GM12878 (cell line): ENCODE measurements at regions of chr22 and their contacts with region 1.

Region 1: DNA sequence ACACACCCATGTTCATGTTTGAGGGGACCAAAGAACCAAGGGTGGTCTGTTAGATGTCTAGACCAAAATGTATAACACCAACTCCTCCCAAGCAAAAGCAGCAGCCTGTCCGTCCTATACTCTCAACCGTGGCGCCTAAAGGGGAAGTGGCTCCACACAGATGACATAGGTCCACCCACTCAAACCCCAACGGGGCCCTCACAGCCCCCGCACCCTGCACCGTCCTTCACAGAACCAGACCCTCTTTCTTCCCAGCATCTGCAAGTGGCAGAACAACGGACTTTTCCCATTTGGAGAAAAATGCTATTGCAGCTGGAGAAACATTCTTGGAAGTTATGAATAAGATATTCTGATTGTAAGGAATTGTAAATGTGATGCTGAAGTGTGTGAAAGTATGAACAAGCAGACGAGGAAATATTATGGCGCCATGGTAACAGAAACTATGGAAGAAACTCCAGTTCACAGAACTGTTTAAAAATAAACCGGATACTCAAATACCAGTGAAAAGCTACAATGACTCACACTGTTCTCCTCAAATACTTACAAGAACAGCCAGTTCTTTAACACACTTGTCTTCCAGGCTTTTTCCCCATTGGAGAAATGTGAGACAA is 76.5 kb upstream of the ARFGAP3 start:
- DNase-seq: peak; percentile 71
- ATAC-seq: peak; percentile 74
- H3K4me3 ChIP-seq: peak overlapping the region; percentile 74
- H3K27ac ChIP-seq: peak overlapping the region; percentile 99
- H3K4me1 ChIP-seq: peaks cover 81% of the 10 kb centered on the region
- H3K27me3 ChIP-seq: no peaks in the 10 kb centered on the region
- CTCF ChIP-seq: no peak
- EP300 ChIP-seq: peak; percentile 88 to 91
- POLR2A ChIP-seq: peak; percentile 67
- RAD21 ChIP-seq: no peak

Region 2: GRCh38 chr22:42493393-42493792 is 440.2 kb before region 1 on chr22:
- CTCF ChIA-PET with region 1: no interaction called
- POLR2A ChIA-PET with region 1: no interaction called
- RAD21 ChIA-PET with region 1: no interaction called
- SMC1A ChIA-PET with region 1: no interaction called
- in situ Hi-C with region 1: no loop called
- intact Hi-C with region 1: no loop called
- DNase-seq: no peak
- ATAC-seq: no peak
- H3K4me3 ChIP-seq: no peak overlapping the region
- H3K27ac ChIP-seq: no peak overlapping the region
- H3K4me1 ChIP-seq: peaks cover 5% of the 10 kb centered on the region
- H3K27me3 ChIP-seq: no peaks in the 10 kb centered on the region
- CTCF ChIP-seq: no peak
- EP300 ChIP-seq: no peak
- POLR2A ChIP-seq: no peak
- RAD21 ChIP-seq: no peak

Region 3: GRCh38 chr22:42889304-42889703 is 44.3 kb before region 1 on chr22:
- CTCF ChIA-PET with region 1: interaction called, 9 read pairs
- POLR2A ChIA-PET with region 1: interaction called, 15 read pairs
- RAD21 ChIA-PET with region 1: interaction called, 15 read pairs
- SMC1A ChIA-PET with region 1: interaction called, 18 read pairs
- in situ Hi-C with region 1: no loop called
- intact Hi-C with region 1: loop called (anchors 2 kb)
- DNase-seq: peak; percentile 97
- ATAC-seq: peak; percentile 90
- H3K4me3 ChIP-seq: peak overlapping the region; percentile 19; the same call in 1 of the 2 replicates
- H3K27ac ChIP-seq: peak overlapping the region; percentile 84
- H3K4me1 ChIP-seq: peaks cover 58% of the 10 kb centered on the region
- H3K27me3 ChIP-seq: no peaks in the 10 kb centered on the region
- CTCF ChIP-seq: no peak
- EP300 ChIP-seq: peak; percentile 89 to 93
- POLR2A ChIP-seq: peak; percentile 52
- RAD21 ChIP-seq: no peak

Region 4: DNA sequence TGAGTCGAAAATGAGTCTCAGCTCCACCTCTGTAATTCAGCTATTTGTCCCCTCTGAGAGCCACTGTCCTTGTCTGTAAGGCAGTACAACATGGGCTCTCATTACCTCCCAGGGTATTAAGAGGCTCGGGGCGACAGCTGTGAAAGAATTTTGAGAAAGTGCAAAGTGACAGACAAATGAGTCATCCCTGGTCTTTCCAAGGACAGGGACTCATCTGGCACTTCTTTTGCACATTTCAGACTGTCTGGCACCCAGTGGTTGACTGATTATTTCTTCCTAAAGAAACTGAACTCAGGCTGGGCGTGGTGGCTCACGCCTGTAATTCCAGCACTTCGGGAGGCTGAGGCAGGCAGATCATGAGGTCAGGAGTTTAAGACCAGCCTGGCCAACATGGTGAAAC is 14.4 kb before region 1 on chr22:
- CTCF ChIA-PET with region 1: interaction called, 12 read pairs
- POLR2A ChIA-PET with region 1: interaction called, 10 read pairs
- RAD21 ChIA-PET with region 1: interaction called, 11 read pairs
- SMC1A ChIA-PET with region 1: interaction called, 35 read pairs
- in situ Hi-C with region 1: no loop called
- intact Hi-C with region 1: no loop called
- DNase-seq: no peak
- ATAC-seq: peak; percentile 36; the same call in 2 of the 3 replicates
- H3K4me3 ChIP-seq: no peak overlapping the region
- H3K27ac ChIP-seq: peak overlapping the region; percentile 33; the same call in 1 of the 2 replicates
- H3K4me1 ChIP-seq: no peaks in the 10 kb centered on the region; the same call in 1 of the 2 replicates
- H3K27me3 ChIP-seq: no peaks in the 10 kb centered on the region
- CTCF ChIP-seq: no peak
- EP300 ChIP-seq: no peak
- POLR2A ChIP-seq: no peak
- RAD21 ChIP-seq: no peak

Region 5: DNA sequence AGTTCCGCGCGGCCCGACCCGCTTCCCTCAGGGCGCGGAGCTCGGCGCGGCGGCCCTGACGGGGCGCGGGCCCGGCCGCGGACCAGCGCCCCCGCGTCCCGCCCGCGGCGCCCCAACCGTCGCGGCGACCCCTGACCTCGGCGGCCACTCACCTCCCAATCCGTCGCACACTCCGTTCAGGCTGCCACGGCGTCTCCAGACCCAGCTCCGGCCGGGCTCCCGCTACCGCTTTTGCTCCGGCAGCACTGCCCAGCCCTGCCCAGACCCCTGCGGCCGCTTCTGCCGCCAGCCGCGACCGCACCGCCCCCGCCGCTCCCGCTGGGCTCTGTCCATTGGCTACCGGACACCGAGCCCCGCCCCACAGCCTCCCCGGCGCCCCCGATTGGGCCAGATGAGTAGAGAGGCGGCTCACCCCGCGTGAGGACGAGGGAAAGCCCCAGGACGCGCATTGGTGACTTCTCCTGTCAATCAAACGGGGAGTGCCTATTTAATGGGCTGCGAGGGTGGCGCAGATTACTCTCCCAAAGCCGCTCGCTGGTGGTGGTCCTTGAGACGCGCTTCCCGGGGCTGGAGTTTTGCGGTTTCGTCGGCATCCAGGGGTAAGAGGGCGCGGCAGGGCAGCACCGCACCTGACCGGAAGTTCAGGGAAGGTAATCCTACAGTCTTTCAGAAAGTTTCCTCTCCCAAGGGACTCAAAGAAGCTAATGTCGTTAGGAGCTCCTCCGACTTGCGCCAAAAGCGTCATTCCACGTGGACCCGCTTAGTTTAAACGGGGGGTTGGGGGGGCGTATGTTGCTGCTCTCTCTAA is 81.5 kb after region 1 on chr22 and contains the start of gene PACSIN2:
- CTCF ChIA-PET with region 1: interaction called, 3 read pairs
- POLR2A ChIA-PET with region 1: interaction called, 8 read pairs
- RAD21 ChIA-PET with region 1: interaction called, 6 read pairs
- SMC1A ChIA-PET with region 1: interaction called, 7 read pairs
- in situ Hi-C with region 1: no loop called
- intact Hi-C with region 1: loop called (anchors 5 kb)
- DNase-seq: peak; percentile 82
- ATAC-seq: peak; percentile 98
- H3K4me3 ChIP-seq: peak within 1 kb of the TSS; percentile 97
- H3K27ac ChIP-seq: peak within 1 kb of the TSS; percentile 68
- H3K4me1 ChIP-seq: no peaks in the 10 kb centered on the region
- H3K27me3 ChIP-seq: no peaks in the 10 kb centered on the region
- CTCF ChIP-seq: 0 out of 6 replicates have a peak, but pooled peaks of 1 of the 3 experiments have one; percentile 0
- EP300 ChIP-seq: no peak
- POLR2A ChIP-seq: peak; percentile 99
- RAD21 ChIP-seq: no peak
- polyA plus RNA-seq, gene PACSIN2: 0.93 to 1.6 TPM

Region 6: DNA sequence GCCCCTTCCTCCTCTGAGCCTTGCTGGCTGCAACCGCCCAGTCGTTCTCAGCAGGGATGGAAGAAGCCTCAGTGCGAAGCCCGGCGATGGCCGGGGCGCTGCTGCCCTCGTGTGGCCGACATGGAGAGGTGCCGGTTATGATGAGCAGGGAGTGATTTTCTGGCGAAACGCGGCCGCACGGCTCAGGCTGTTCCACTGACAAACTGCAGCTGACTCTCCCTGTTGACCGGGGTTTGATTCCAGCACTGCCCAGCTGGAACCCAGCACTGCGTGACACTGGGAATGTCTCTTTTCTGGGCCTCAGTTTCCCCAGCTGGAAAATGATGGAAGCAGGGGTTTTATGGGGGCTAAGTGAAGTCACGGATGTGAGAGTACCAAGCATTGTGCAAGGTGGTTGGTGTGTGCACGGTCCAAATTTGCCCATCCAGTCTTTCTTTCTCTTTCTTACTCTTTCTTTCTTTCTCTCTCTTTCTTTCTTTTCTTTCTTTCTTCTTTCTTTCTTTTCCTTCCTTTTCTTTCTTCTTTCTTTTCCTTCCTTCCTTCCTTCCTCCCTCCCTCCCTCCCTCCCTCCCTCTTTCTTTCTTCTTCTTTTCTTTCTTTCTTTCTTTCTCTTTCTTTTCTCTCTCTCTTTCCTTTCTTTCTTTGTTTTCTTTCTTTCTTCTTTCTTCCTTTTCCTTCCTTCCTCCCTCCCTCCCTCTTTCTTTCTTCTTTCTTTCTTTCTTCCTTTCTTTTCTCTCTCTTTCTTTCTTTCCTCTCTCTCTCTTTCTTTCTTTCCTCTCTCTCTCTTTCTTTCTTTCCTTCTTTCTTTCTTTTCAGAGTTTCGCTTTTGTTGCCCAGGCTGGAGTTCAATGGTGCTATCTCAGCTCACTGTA is 452.4 kb after region 1 on chr22:
- CTCF ChIA-PET with region 1: no interaction called
- POLR2A ChIA-PET with region 1: no interaction called
- RAD21 ChIA-PET with region 1: no interaction called
- SMC1A ChIA-PET with region 1: no interaction called
- in situ Hi-C with region 1: no loop called
- intact Hi-C with region 1: no loop called
- DNase-seq: no peak
- ATAC-seq: peak; percentile 97
- H3K4me3 ChIP-seq: no peak overlapping the region
- H3K27ac ChIP-seq: no peak overlapping the region
- H3K4me1 ChIP-seq: peaks cover 4% of the 10 kb centered on the region; the same call in 1 of the 2 replicates
- H3K27me3 ChIP-seq: peaks cover 0 to 3% of the 10 kb centered on the region in 2 experiments; a peak in 3 of 4 replicates
- CTCF ChIP-seq: peak; percentile 87 to 94 (median 92); a peak in 5 of 6 replicates
- EP300 ChIP-seq: no peak
- POLR2A ChIP-seq: no peak
- RAD21 ChIP-seq: peak; percentile 96